Activated CD4-positive, alpha-beta memory T cell treated with anti-CD3 and anti-CD28 coated beads, Interleukin-2, amount 10 ng/mL, durations not matched to agents 7 days and 5 days (primary cell): ENCODE measurements at regions of chr3 and their contacts with region 1.

Region 1: DNA sequence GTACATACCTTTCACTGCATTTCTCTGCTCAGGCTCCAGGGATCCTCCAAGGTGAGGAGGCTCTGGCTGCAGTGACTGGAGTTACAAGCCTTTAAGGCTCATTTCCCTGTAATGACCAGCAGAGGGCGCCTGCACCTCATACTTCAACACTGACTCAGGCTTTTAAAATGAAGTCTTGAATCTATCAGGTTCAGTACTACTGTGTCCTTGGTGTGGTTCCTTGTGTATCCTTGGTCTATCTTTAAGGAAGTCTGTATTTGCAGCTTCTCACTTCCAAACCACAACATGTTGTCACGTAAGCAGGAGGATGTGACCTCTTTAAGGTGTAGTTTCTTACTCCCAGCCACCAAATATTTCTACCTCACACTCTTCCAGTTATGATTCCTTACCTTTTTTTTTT is 122.5 kb upstream of the ZBED2 start:
- DNase-seq: peak; percentile 74
- H3K4me3 Mint-ChIP-seq: no peak overlapping the region
- H3K27ac Mint-ChIP-seq: peak overlapping the region; percentile 1
- H3K4me1 Mint-ChIP-seq: peaks cover 3% of the 10 kb centered on the region
- H3K27me3 Mint-ChIP-seq: no peaks in the 10 kb centered on the region

Region 2: GRCh38 chr3:111859974-111860859 is 142.6 kb after region 1 on chr3:
- CTCF ChIA-PET with region 1: interaction called, 48 read pairs
- POLR2A ChIA-PET with region 1: no interaction called
- DNase-seq: peak; percentile 72
- H3K4me3 Mint-ChIP-seq: peak overlapping the region; percentile 87
- H3K27ac Mint-ChIP-seq: peak overlapping the region; percentile 61
- H3K4me1 Mint-ChIP-seq: peaks cover 18% of the 10 kb centered on the region
- H3K27me3 Mint-ChIP-seq: peaks cover 38% of the 10 kb centered on the region